GM12878 (cell line): ENCODE measurements at regions of chr19 and their contacts with region 1.

Region 1: DNA sequence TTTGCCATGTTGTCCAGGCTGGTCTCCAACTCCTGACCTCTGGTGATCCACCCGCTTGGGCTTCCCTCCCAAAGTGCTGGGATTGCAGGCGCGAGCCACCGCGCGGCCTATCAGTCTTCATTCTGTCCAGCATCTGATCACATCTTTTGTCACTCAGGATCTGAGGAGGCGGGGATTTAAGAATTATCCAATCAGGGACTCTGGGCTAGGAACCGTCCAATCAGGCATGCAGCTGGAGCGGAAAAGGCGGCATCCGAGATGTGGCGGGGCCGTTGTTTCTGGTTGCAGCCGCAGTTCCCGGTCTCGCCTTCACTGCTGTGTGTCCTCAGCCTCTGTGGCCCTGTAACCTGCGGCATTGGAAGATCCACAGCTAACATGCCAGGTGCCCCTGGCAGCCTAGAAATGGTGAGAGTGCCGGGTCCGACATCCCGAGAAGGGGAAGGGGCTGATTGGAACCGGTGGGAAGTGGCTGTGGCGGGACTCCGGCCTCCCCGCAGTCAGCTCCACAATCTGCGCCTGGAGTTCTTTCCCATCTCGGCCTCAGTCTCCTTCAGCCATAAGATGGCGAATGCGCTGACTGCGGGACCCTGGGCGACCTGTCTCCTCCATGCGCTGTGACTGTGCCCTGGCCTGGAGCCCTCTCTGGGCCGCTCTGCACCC is at the start of gene ZNF729:
- DNase-seq: no peak
- ATAC-seq: no peak
- H3K4me3 ChIP-seq: no peak within 1 kb of the TSS
- H3K27ac ChIP-seq: no peak within 1 kb of the TSS
- H3K4me1 ChIP-seq: no peaks in the 10 kb centered on the region
- H3K27me3 ChIP-seq: no peaks in the 10 kb centered on the region
- CTCF ChIP-seq: no peak
- EP300 ChIP-seq: no peak
- POLR2A ChIP-seq: no peak
- RAD21 ChIP-seq: no peak
- polyA plus RNA-seq, gene ZNF729: not detected

Region 2: GRCh38 chr19:22335716-22336115 is 49.4 kb after region 1 on chr19:
- CTCF ChIA-PET with region 1: no interaction called
- POLR2A ChIA-PET with region 1: no interaction called
- RAD21 ChIA-PET with region 1: no interaction called
- SMC1A ChIA-PET with region 1: no interaction called
- in situ Hi-C with region 1: loop called (anchors 5 kb)
- intact Hi-C with region 1: no loop called
- DNase-seq: no peak
- ATAC-seq: no peak
- H3K4me3 ChIP-seq: no peak overlapping the region
- H3K27ac ChIP-seq: no peak overlapping the region
- H3K4me1 ChIP-seq: no peaks in the 10 kb centered on the region
- H3K27me3 ChIP-seq: no peaks in the 10 kb centered on the region
- CTCF ChIP-seq: no peak
- EP300 ChIP-seq: no peak
- POLR2A ChIP-seq: no peak
- RAD21 ChIP-seq: no peak